ENCODE measurements at regions of chr1 and their contacts with region 1.

Region 1: DNA sequence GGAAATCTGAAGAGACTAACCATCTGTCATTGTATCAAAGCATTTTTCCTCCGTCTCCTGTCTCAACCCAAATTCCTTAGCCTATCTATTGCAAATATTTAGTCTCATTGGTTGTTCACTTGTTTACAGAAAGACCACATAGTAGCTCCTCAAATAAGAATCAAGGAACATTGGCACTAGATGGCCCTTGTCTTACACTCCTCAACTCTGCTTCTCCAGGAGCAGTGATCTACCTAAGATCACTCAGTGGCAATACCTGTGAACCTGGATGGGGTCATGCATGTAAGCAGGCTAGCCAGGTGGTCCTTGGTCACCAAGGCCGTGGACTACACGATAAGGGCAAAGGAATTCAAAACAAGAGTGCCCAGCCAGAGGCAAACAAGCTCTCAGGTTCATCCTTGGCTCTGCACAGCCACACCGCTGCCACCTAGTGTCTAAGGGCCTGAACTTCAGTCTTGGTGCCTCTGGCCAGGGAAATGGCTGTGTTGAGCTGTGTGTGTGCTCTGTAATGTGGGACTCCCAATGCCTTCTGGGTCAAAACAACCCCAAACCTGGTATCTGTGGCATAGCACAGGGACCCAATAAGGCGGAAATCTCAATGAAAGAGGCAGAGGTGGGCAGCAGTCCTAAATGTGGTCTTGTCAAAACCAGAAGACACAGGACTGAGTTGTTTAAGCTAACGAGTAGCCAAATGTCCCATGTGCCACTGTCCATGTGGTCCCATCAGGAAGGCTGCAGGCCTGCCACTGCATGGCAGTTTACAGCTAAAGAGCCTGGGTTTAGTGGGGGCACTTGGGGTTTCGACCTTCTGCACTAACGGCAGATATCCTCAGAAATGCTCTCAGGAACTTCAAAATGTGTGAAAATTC is 54.5 kb downstream of the GPR161 start:
- DNase-seq: peak; percentile 67 to 69
- H3K4me3 ChIP-seq: no peak overlapping the region
- H3K27ac ChIP-seq: peak overlapping the region; percentile 32 to 69
- H3K4me1 ChIP-seq: no peaks in the 10 kb centered on the region
- H3K27me3 ChIP-seq: no peaks in the 10 kb centered on the region
- CTCF ChIP-seq: peak; percentile 62 to 91 (median 75)
- POLR2A ChIP-seq: no peak

Region 2: DNA sequence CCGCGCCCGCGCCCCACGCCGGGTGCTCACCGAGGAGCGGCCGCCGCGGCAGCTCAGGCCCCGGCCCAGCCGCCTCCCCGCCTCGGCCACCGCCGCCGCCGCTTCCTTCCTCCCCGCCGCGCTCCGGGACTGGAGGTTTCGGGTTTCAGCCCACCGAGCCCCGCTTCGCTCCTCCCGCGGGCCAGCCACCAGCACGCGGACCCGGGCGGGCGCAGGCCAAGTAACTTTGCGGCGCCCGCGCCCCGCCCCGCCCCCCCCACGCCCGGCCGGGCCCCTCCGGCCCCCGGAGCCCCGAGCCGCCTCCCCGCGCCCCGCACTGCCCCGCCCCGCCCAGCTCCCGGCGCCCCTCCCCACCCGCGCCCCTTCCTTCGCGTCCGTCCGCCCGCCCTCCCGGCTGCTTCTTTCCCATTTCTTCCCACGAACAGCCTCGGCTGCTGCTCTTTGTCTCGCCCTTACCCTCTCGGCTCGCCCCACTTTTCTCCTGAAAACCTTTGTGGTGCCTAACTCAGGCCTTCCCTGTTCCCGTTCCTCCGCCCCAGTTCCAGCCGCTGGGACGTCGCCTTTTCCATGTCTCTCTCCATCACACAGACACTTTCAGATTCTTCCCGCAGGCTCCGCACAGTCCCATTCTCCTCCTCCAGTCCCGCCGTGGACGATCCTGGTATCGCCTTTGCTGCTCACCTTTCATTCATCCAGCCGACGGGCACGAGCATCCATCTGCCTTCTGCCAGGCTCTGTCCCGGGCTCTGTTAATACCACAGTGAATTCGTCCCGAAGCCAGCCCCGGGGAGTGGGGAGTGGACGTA is 54.7 kb after region 1 on chr1 and contains the start of gene GPR161:
- intact Hi-C with region 1: loop called (anchors 10 kb)
- DNase-seq: peak; percentile 70 to 73
- H3K4me3 ChIP-seq: peak within 1 kb of the TSS; percentile 82 to 85
- H3K27ac ChIP-seq: peak within 1 kb of the TSS; percentile 89 to 96
- H3K4me1 ChIP-seq: no peaks in the 10 kb centered on the region
- H3K27me3 ChIP-seq: no peaks in the 10 kb centered on the region
- CTCF ChIP-seq: peak in 1 of 4 experiments; percentile 19
- POLR2A ChIP-seq: peak in 1 of 2 donors; percentile 36
- total RNA-seq, gene GPR161: 9.7 to 45.5 (median 37.6) TPM

Region 3: DNA sequence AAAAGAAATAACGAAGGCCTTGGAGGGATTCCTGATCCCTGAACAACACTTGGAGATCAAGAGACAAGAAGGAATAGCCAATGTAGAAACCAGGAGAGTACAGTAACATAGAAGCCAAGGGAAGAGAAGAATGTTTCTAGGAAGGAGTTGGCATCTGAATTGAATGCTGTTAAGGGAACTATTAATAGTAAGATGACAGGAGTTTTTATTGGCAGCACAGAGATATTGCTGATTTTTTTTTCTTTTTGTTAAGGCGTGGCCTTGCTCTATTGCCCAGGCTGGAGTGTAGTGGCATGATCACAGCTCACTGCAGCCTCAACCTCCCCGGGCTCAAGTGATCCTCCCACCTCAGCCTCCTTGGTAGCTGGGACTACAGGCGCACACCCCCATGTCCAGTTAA is 133.9 kb after region 1 on chr1:
- intact Hi-C with region 1: no loop called
- DNase-seq: no peak
- H3K4me3 ChIP-seq: no peak overlapping the region
- H3K27ac ChIP-seq: no peak overlapping the region
- H3K4me1 ChIP-seq: no peaks in the 10 kb centered on the region
- H3K27me3 ChIP-seq: no peaks in the 10 kb centered on the region
- CTCF ChIP-seq: no peak
- POLR2A ChIP-seq: no peak